ENCODE measurements at regions of chr20 and their contacts with region 1.

Region 1: DNA sequence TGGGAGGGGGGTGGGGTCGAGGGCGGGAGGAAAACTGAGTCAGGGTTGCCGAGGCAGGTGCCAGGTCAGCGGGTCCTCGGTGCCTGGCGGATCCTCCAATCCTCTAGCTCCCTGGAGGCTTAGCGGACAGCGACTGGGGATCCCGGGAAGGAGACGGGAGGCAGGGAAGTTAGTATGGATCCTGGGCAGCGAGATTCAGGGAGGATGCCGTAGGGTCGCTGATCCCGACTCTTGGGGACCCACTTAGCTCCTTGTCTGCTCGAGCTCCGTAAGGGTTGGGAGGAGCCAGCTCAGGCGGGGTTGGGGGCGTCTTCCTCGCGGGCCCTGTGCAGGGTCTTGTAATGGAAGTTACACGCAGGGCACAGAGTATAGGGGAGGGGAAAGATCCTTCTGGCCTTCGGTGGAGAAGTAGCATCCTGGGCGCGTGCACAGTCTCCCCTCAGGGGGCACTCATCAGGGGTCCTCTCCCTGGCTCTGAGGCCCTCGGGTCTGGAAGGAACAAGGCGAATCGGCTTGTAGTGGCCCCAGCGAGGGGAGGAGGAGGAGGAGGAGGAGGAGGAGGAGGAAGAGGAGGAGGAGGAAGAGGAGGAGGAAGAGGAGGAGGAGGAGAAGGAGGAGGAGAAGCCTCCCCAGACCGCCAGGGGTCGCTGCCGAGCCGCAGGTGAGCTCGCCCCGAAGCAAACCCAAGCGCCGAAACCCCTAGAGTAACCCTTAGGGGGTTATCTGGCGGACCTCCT is 6.4 kb upstream of the SLC12A5 start:
- DNase-seq: peak; percentile 93
- H3K4me3 ChIP-seq: peak overlapping the region in 6 of 8 donors; percentile 22 to 75 (median 50)
- H3K27ac ChIP-seq: peak overlapping the region in 2 of 8 donors; percentile 35 to 74
- H3K4me1 ChIP-seq: peaks cover 9 to 30% (median 25%) of the 10 kb centered on the region in 6 donors
- H3K27me3 ChIP-seq: peaks cover 0 to 76% (median 25%) of the 10 kb centered on the region in 7 donors
- CTCF ChIP-seq: peak; percentile 30 to 89 (median 68)
- POLR2A ChIP-seq: no peak

Region 2: GRCh38 chr20:46089417-46090388 is 67.1 kb after region 1 on chr20 and contains the start of gene NCOA5:
- intact Hi-C with region 1: loop called (anchors 10 kb)
- DNase-seq: peak; percentile 98
- H3K4me3 ChIP-seq: peak within 1 kb of the TSS; percentile 66 to 94 (median 74)
- H3K27ac ChIP-seq: peak within 1 kb of the TSS; percentile 96 to 99 (median 99)
- H3K4me1 ChIP-seq: peaks cover 38 to 54% (median 51%) of the 10 kb centered on the region in 6 donors
- H3K27me3 ChIP-seq: no peaks in the 10 kb centered on the region
- CTCF ChIP-seq: peak in 6 of 11 experiments; percentile 15 to 45 (median 41)
- POLR2A ChIP-seq: peak; percentile 68 to 74 (median 72)
- total RNA-seq, gene NCOA5: 27.3 to 33.2 (median 29.2) TPM

Region 3: GRCh38 chr20:46108435-46108841 is 85.9 kb after region 1 on chr20:
- intact Hi-C with region 1: no loop called
- DNase-seq: no peak
- H3K4me3 ChIP-seq: no peak overlapping the region
- H3K27ac ChIP-seq: peak overlapping the region in 7 of 8 donors; percentile 5 to 83 (median 69)
- H3K4me1 ChIP-seq: peaks cover 4 to 39% (median 21%) of the 10 kb centered on the region in 6 donors
- H3K27me3 ChIP-seq: peaks cover 0 to 16% (median 0%) of the 10 kb centered on the region in 7 donors
- CTCF ChIP-seq: no peak
- POLR2A ChIP-seq: no peak

Region 4: DNA sequence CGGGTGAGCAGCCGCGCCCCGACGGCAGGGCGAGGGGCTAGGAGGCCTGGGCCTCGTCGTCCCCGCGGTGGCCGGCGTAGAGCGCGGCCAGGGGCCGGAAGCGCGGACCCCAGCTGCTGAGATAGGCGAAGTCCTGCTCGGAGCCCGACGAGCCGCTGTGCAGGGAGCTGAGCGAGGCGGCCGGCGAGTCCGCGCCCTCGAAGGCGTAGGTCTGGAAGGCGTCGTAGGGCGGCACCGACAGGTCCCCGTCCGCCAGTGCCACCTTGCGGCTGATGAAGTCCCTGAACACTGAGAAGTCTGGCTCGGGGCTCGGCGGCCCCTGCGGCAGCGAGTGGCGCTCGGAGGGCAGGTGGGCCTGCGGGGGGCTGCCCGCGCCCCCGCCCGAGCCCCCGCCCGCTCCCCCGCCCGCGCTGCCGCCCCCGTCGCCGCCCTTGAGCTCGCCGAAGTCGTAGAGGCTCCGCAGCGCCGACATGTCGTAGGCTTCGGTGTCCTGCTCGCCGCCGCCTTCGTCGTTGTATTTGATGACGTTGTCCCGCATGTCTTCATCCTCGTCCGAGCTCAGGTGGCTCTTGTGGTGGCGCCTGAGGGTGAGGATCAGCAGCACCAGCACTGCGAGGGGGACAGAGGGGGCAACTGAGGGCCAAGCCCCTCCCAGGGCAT is 152.0 kb after region 1 on chr20:
- intact Hi-C with region 1: loop called (anchors 5 kb)
- DNase-seq: peak; percentile 91
- H3K4me3 ChIP-seq: peak overlapping the region in 2 of 8 donors; percentile 15 to 49
- H3K27ac ChIP-seq: no peak overlapping the region
- H3K4me1 ChIP-seq: peaks cover 0 to 10% (median 6%) of the 10 kb centered on the region in 6 donors
- H3K27me3 ChIP-seq: peaks cover 5 to 91% (median 32%) of the 10 kb centered on the region in 7 donors
- CTCF ChIP-seq: peak in 10 of 11 experiments; percentile 25 to 79 (median 58)
- POLR2A ChIP-seq: no peak

Measured in spleen (tissue), 13 donors.